AG04449 (cell line): ENCODE measurements at regions of chr11 and their contacts with region 1.

Region 1: GRCh38 chr11:93895106-93895862 is 44.9 kb upstream of the VSTM5 start:
- DNase-seq: peak; percentile 79
- H3K4me3 ChIP-seq: no peak overlapping the region
- CTCF ChIP-seq: peak; percentile 68

Region 2: DNA sequence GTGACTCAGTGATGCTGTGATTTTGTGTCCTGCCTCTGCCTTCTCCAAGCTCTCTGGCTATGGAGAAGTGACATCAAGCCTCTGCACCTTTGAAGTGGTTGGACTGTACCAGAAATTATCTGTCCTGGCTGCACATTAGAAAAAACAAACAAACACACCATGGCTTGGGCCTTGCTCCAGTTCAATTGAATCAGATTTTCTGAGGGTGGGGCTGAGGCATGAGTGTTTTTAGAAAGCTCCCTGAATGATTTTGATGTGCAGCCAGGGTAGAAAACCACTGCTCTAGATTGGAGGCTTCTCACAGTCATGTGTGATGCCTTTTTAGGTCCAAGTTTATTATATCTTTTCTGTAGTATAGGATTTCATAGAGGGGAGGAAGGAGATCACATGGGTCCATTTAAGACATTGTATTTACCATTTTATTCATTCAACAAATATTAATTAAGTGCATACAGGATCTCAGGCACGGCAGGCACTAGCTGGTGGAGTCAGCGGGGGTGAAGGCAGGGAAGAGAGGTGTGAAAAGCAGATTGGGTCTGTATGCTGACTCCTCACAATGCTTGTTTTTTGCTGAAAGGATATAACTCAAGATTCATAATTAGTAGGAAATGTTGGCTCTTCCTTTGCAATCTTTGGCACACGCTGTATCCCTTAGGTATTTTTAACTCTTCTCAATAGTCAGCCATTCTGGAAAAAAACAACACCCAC is 37.7 kb before region 1 on chr11:
- CTCF ChIA-PET with region 1: no interaction called
- POLR2A ChIA-PET with region 1: no interaction called
- DNase-seq: no peak
- H3K4me3 ChIP-seq: no peak overlapping the region
- CTCF ChIP-seq: no peak

Region 3: GRCh38 chr11:94002226-94002625 is 106.9 kb after region 1 on chr11:
- CTCF ChIA-PET with region 1: no interaction called
- POLR2A ChIA-PET with region 1: no interaction called
- DNase-seq: no peak
- H3K4me3 ChIP-seq: no peak overlapping the region
- CTCF ChIP-seq: no peak

Region 4: DNA sequence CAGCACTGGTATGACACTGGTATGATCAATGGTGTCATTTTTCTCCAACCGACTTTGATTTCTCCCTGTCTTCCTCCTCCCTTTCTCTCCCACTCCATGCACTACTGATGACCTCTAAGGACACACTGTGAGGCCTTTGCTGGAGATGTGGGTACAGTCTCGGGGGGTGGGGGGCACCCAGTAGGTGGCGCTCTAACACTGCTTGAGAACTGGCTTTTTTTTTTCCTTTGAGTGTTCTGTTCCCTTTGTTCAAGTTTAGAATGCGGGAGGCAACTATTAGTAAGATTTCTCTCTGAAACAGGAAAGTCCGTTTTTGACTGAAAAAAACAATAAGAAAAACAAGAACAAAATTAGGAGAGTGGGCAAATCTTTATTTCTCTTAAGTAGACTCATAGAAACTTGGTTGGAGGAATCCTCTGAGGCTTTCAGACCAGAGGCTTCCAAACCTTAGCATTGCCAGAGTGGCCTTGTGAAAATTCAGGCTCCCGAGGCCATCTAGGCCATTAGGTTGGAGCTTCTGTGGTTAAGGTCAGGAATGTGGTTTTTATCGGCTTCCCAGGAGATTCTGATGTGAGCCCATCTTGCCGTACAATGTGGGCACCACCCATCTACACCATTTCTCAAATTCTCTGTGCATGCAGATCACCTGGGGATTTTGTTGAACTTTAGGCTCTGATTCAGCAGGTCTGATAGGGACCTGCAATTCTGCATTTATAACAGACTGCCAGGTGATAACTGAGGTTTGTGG is 276.6 kb after region 1 on chr11:
- CTCF ChIA-PET with region 1: interaction called, 17 read pairs
- POLR2A ChIA-PET with region 1: interaction called, 4 read pairs
- DNase-seq: no peak
- H3K4me3 ChIP-seq: no peak overlapping the region
- CTCF ChIP-seq: peak; percentile 81

Region 5: DNA sequence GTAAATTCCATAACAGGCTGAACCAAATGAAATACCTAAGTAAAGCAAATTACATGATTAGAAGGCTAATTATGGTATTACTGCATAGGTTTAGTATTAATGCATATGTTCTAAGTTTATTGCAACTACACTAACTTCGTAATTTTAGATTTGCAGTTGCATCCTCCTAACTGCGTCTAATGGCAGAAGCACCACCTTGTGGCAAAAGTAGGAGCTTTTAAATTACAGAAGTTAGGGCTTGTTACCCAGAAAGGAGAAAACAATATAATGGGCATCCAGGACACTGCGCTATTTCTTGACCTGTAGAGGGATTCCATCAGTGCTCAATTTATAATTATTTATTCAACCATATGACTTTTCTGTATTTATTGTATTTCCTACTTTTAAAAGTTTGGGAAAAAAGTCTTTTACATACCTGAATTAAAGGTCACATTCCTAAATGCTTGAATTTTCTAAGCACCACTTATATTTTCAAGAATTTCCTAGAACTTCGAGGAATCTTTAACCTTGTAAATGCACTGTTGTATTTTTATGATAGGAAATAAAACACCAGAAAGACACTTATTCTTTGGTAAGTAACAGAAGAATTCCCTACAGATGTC is 522.2 kb after region 1 on chr11:
- CTCF ChIA-PET with region 1: interaction called, 100 read pairs
- POLR2A ChIA-PET with region 1: no interaction called
- DNase-seq: peak; percentile 14
- H3K4me3 ChIP-seq: no peak overlapping the region
- CTCF ChIP-seq: peak; percentile 51

Region 6: GRCh38 chr11:94493281-94494125 is 598.2 kb after region 1 on chr11 and contains the starts of genes ANKRD49 and MRE11:
- CTCF ChIA-PET with region 1: interaction called, 12 read pairs
- POLR2A ChIA-PET with region 1: no interaction called
- DNase-seq: peak; percentile 81
- H3K4me3 ChIP-seq: peak within 1 kb of the TSS; percentile 88
- CTCF ChIP-seq: no peak

Region 7: GRCh38 chr11:94511932-94512781 is 616.9 kb after region 1 on chr11 and contains the start of gene C11orf97:
- CTCF ChIA-PET with region 1: interaction called, 147 read pairs
- POLR2A ChIA-PET with region 1: no interaction called
- DNase-seq: no peak
- H3K4me3 ChIP-seq: peak within 1 kb of the TSS; percentile 62
- CTCF ChIP-seq: no peak

Region 8: GRCh38 chr11:94602430-94603372 is 707.4 kb after region 1 on chr11:
- CTCF ChIA-PET with region 1: interaction called, 48 read pairs
- POLR2A ChIA-PET with region 1: no interaction called
- DNase-seq: peak; percentile 45
- H3K4me3 ChIP-seq: no peak overlapping the region
- CTCF ChIP-seq: peak; percentile 58